ENCODE measurements at regions of chr20 and their contacts with region 1.

Region 1: GRCh38 chr20:52127309-52127708 is 64.3 kb downstream of the ZFP64 start:
- DNase-seq: no peak
- H3K4me3 ChIP-seq: no peak overlapping the region
- H3K27ac ChIP-seq: no peak overlapping the region
- H3K4me1 ChIP-seq: no peaks in the 10 kb centered on the region
- H3K27me3 ChIP-seq: no peaks in the 10 kb centered on the region
- CTCF ChIP-seq: no peak

Region 2: GRCh38 chr20:51680065-51680740 is 447.1 kb before region 1 on chr20:
- CTCF ChIA-PET with region 1: no interaction called
- dilution Hi-C with region 1: loop called (anchors 5 kb)
- in situ Hi-C with region 1: no loop called
- intact Hi-C with region 1: no loop called
- DNase-seq: no peak
- H3K4me3 ChIP-seq: no peak overlapping the region
- H3K27ac ChIP-seq: no peak overlapping the region
- H3K4me1 ChIP-seq: no peaks in the 10 kb centered on the region
- H3K27me3 ChIP-seq: no peaks in the 10 kb centered on the region
- CTCF ChIP-seq: no peak

Region 3: DNA sequence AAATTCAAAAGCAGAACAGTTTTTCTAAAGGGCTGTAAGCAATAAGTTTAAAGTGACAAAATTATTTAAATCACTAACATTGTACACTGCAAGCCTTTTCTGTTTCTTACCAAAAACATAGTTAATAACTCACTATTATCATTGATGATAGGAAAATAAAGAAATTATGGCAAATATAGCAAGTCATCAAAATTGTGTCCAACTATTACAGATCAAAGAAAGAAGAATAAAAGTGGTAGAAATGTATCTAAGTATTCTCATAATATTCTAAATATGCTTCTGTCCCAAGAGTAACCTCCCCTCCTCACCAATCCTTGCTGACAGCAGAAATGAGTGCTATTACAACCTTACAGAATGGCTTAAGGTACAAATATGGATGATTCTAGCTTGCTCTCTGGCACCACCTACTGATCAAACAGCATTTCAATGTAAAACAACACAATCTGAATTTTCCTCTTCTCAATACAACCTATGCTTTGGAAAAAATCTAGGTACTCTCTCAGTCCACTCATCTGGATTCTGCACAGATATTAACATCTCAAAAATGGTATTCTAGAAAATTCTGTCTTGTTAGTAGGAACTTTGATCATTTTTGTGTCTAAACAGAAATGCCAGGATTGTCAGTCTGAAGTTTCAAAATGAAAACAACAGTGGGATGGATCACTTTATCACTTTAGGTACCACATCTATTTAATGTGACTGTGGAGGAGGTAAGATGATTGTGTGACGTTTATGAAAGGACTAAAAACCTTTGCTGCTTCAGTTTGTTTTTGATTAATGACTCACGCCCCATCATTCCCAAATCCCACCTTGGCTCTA is 23.3 kb after region 1 on chr20:
- CTCF ChIA-PET with region 1: interaction called, 3 read pairs
- dilution Hi-C with region 1: no loop called
- in situ Hi-C with region 1: no loop called
- intact Hi-C with region 1: loop called (anchors 1 kb)
- DNase-seq: peak; percentile 26
- H3K4me3 ChIP-seq: no peak overlapping the region
- H3K27ac ChIP-seq: no peak overlapping the region
- H3K4me1 ChIP-seq: no peaks in the 10 kb centered on the region
- H3K27me3 ChIP-seq: no peaks in the 10 kb centered on the region
- CTCF ChIP-seq: peak; percentile 82 to 89

Region 4: GRCh38 chr20:52219441-52219840 is 92.1 kb after region 1 on chr20:
- CTCF ChIA-PET with region 1: no interaction called
- dilution Hi-C with region 1: no loop called
- in situ Hi-C with region 1: no loop called
- intact Hi-C with region 1: loop called (anchors 1 kb)
- DNase-seq: no peak
- H3K4me3 ChIP-seq: no peak overlapping the region
- H3K27ac ChIP-seq: no peak overlapping the region
- H3K4me1 ChIP-seq: no peaks in the 10 kb centered on the region
- H3K27me3 ChIP-seq: no peaks in the 10 kb centered on the region
- CTCF ChIP-seq: peak in 1 of 2 donors; percentile 10

Region 5: GRCh38 chr20:52312132-52312729 is 184.9 kb after region 1 on chr20:
- CTCF ChIA-PET with region 1: no interaction called
- dilution Hi-C with region 1: no loop called
- in situ Hi-C with region 1: no loop called
- intact Hi-C with region 1: loop called (anchors 2 kb)
- DNase-seq: peak; percentile 32
- H3K4me3 ChIP-seq: no peak overlapping the region
- H3K27ac ChIP-seq: no peak overlapping the region
- H3K4me1 ChIP-seq: no peaks in the 10 kb centered on the region
- H3K27me3 ChIP-seq: no peaks in the 10 kb centered on the region
- CTCF ChIP-seq: peak; percentile 73 to 80

Region 6: DNA sequence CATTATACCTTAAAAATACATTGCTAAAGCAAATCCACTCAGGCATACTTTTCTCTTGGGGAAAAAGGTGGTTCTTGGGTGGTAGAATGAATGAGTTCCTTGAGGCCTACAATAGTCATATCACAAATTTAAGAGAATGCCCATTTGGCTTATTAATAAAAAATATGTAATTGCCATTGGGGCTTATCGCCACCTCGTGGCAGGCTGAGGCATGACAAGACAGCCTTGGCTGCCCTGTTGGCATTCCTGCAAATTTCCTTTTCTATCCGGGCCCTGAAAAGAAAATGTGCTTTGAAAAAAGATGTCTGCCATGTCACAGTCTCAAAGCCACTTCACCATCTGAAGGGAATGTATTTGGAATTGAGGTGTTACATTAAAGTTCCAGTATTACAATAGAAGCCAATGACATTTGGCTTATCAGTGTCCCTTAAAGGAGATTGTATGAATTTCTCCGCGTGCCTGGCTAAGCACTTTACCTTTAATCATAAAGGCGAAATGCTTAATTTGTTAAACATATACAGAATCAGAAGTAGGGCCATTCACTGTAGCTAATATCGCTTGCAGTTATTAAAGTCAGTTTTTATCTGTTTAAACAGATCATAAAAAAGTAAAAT is 252.5 kb after region 1 on chr20:
- CTCF ChIA-PET with region 1: interaction called, 6 read pairs
- dilution Hi-C with region 1: no loop called
- in situ Hi-C with region 1: no loop called
- intact Hi-C with region 1: loop called (anchors 1 kb)
- DNase-seq: no peak
- H3K4me3 ChIP-seq: no peak overlapping the region
- H3K27ac ChIP-seq: no peak overlapping the region
- H3K4me1 ChIP-seq: no peaks in the 10 kb centered on the region
- H3K27me3 ChIP-seq: no peaks in the 10 kb centered on the region
- CTCF ChIP-seq: peak; percentile 84 to 89

Region 7: GRCh38 chr20:53547664-53548239 is 1420.4 kb after region 1 on chr20:
- CTCF ChIA-PET with region 1: interaction called, 3 read pairs
- dilution Hi-C with region 1: no loop called
- in situ Hi-C with region 1: no loop called
- intact Hi-C with region 1: loop called (anchors 2 kb)
- DNase-seq: peak; percentile 41
- H3K4me3 ChIP-seq: no peak overlapping the region
- H3K27ac ChIP-seq: no peak overlapping the region
- H3K4me1 ChIP-seq: no peaks in the 10 kb centered on the region
- H3K27me3 ChIP-seq: no peaks in the 10 kb centered on the region
- CTCF ChIP-seq: peak; percentile 85 to 87

Measured in mammary epithelial cell (primary cell).